ENCODE measurements at regions of chr5 and their contacts with region 1.

Region 1: GRCh38 chr5:97162045-97162444 is 19.6 kb upstream of the LIX1 start:
- DNase-seq: peak; percentile 44
- ATAC-seq: peak; percentile 82
- H3K4me3 ChIP-seq: no peak overlapping the region
- H3K27ac ChIP-seq: no peak overlapping the region
- H3K4me1 ChIP-seq: no peaks in the 10 kb centered on the region; the same call in 1 of the 2 replicates
- H3K27me3 ChIP-seq: no peaks in the 10 kb centered on the region
- CTCF ChIP-seq: peak; percentile 77 to 84 (median 82)
- EP300 ChIP-seq: no peak
- POLR2A ChIP-seq: no peak
- RAD21 ChIP-seq: peak; percentile 85

Region 2: GRCh38 chr5:96614110-96614691 is 547.8 kb before region 1 on chr5:
- CTCF ChIA-PET with region 1: interaction called, 30 read pairs
- POLR2A ChIA-PET with region 1: no interaction called
- RAD21 ChIA-PET with region 1: interaction called, 13 read pairs
- SMC1A ChIA-PET with region 1: interaction called, 13 read pairs
- in situ Hi-C with region 1: loop called (anchors 10 kb)
- intact Hi-C with region 1: loop called (anchors 2 kb)
- DNase-seq: peak; percentile 25
- ATAC-seq: peak; percentile 86
- H3K4me3 ChIP-seq: no peak overlapping the region
- H3K27ac ChIP-seq: no peak overlapping the region
- H3K4me1 ChIP-seq: no peaks in the 10 kb centered on the region
- H3K27me3 ChIP-seq: no peaks in the 10 kb centered on the region; a peak in 2 of 4 replicates
- CTCF ChIP-seq: peak; percentile 24 to 71 (median 45); a peak in 4 of 6 replicates
- EP300 ChIP-seq: no peak
- POLR2A ChIP-seq: no peak
- RAD21 ChIP-seq: peak; percentile 87

Region 3: GRCh38 chr5:96763026-96763425 is 399.0 kb before region 1 on chr5:
- CTCF ChIA-PET with region 1: interaction called, 19 read pairs
- POLR2A ChIA-PET with region 1: no interaction called
- RAD21 ChIA-PET with region 1: interaction called, 3 read pairs
- SMC1A ChIA-PET with region 1: interaction called, 10 read pairs
- in situ Hi-C with region 1: no loop called
- intact Hi-C with region 1: no loop called
- DNase-seq: no peak
- ATAC-seq: no peak
- H3K4me3 ChIP-seq: no peak overlapping the region
- H3K27ac ChIP-seq: no peak overlapping the region
- H3K4me1 ChIP-seq: no peaks in the 10 kb centered on the region
- H3K27me3 ChIP-seq: no peaks in the 10 kb centered on the region
- CTCF ChIP-seq: no peak
- EP300 ChIP-seq: no peak
- POLR2A ChIP-seq: no peak
- RAD21 ChIP-seq: no peak

Region 4: DNA sequence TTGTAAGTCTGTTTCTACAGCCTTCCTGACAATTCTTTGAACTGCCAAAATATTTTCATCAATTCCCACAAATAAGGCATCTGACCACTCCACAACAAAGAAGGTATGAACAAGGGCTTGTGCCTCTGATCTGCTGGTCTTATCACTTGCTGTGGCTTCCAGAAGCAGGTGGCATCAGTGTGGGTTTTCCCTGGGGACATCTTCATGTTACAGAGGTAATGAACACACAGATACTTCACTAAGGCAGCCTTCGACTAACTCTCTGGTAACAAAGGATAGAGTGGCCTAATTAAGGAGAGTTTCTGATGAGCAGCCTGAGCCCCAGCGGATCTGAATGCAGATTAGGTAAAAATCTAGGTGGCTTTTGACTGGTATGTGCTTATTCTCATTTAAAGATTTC is 301.0 kb before region 1 on chr5:
- CTCF ChIA-PET with region 1: interaction called, 223 read pairs
- POLR2A ChIA-PET with region 1: no interaction called
- RAD21 ChIA-PET with region 1: interaction called, 10 read pairs
- SMC1A ChIA-PET with region 1: interaction called, 178 read pairs
- in situ Hi-C with region 1: no loop called
- intact Hi-C with region 1: no loop called
- DNase-seq: no peak
- ATAC-seq: peak; percentile 84
- H3K4me3 ChIP-seq: no peak overlapping the region
- H3K27ac ChIP-seq: no peak overlapping the region
- H3K4me1 ChIP-seq: no peaks in the 10 kb centered on the region
- H3K27me3 ChIP-seq: no peaks in the 10 kb centered on the region
- CTCF ChIP-seq: no peak
- EP300 ChIP-seq: no peak; a peak in 1 of 4 replicates
- POLR2A ChIP-seq: no peak
- RAD21 ChIP-seq: no peak

Region 5: GRCh38 chr5:97009212-97009898 is 152.7 kb before region 1 on chr5:
- CTCF ChIA-PET with region 1: interaction called, 14 read pairs
- POLR2A ChIA-PET with region 1: no interaction called
- RAD21 ChIA-PET with region 1: interaction called, 5 read pairs
- SMC1A ChIA-PET with region 1: interaction called, 8 read pairs
- in situ Hi-C with region 1: no loop called
- intact Hi-C with region 1: no loop called
- DNase-seq: peak; percentile 19
- ATAC-seq: peak; percentile 86
- H3K4me3 ChIP-seq: no peak overlapping the region
- H3K27ac ChIP-seq: peak overlapping the region; percentile 8; the same call in 1 of the 2 replicates
- H3K4me1 ChIP-seq: peaks cover 11% of the 10 kb centered on the region; the same call in 1 of the 2 replicates
- H3K27me3 ChIP-seq: no peaks in the 10 kb centered on the region
- CTCF ChIP-seq: no peak
- EP300 ChIP-seq: no peak
- POLR2A ChIP-seq: no peak
- RAD21 ChIP-seq: no peak

Region 6: DNA sequence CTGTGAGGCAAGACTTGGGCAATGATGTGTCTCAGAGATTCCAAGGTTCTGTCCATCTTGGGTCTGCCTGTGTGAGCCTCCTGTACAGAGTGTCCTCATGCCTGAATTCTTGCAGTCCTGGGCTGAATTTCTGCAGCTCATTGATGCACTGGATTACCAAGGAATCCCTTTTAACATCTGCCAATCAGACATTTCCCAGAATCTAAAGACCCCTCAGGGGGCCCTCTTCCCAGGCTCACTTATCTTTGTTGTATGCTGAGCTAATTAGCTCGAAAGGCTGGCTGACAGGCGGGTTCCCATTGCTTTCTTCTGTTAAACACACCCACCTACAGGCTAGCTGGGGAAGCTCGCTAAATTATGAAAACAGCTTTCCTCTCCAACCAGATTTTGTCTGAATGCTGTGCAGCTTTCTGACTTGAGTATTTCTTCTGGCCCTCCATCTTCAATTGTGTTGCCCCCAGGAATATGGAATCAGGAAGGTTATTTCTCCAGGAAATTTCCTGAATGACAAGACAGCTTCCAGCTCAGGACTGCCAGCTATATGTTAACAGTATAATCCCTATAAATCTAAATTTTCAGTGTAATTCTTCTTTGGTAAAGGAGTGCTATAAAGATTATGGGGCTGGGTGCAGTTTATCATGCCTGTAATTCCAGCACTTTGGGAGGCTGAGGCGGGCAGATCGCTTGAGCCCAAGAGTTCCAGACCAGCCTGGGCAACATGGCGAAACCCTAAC is 19.4 kb before region 1 on chr5 and contains the start of gene LIX1:
- CTCF ChIA-PET with region 1: interaction called, 121 read pairs
- POLR2A ChIA-PET with region 1: interaction called, 3 read pairs
- RAD21 ChIA-PET with region 1: interaction called, 25 read pairs
- SMC1A ChIA-PET with region 1: interaction called, 18 read pairs
- in situ Hi-C with region 1: no loop called
- intact Hi-C with region 1: no loop called
- DNase-seq: no peak
- ATAC-seq: peak; percentile 97
- H3K4me3 ChIP-seq: no peak within 1 kb of the TSS
- H3K27ac ChIP-seq: no peak within 1 kb of the TSS
- H3K4me1 ChIP-seq: no peaks in the 10 kb centered on the region
- H3K27me3 ChIP-seq: no peaks in the 10 kb centered on the region
- CTCF ChIP-seq: peak; percentile 60 to 84 (median 70); a peak in 5 of 6 replicates
- EP300 ChIP-seq: no peak
- POLR2A ChIP-seq: no peak
- RAD21 ChIP-seq: peak; percentile 91
- polyA plus RNA-seq, gene LIX1: 0.02 TPM

Region 7: DNA sequence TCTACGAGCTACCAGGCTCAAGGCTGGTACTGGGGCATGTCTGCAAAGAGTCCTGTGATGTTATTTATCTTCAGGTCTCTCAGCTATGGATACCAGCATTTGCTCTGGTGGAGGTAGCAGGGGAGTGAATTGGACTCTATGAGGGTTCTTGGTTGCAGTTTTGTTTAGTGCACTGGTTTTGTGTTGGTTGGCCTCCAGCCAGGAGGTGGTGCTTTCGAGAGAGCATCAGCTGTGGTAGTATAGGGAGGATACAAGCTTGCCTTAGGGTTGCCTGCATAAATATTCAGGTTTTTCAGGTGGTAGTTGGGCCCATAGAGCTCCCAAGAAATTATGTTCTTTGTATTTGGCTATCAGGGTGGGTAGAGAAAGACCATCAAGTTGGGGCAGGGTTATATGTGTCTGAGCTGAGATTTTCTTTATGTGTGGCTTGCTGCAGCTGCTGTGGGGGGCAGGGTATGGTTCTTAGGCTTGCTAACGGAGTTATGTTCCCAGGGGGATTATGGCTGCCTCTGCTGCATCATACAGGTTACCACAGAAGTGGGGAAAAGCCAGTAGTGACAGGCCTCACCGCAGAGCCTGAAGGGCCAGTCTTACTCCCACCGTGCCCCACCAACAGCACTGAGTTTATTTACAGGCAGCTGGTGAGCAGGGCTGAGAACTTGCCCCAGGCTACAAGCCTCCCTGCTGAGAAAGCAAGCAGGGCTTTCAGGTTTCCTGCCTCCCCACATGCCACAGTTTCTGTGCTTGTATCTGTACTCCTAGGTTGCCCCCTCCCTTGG is 30.7 kb after region 1 on chr5:
- CTCF ChIA-PET with region 1: interaction called, 13 read pairs
- POLR2A ChIA-PET with region 1: no interaction called
- RAD21 ChIA-PET with region 1: no interaction called
- SMC1A ChIA-PET with region 1: interaction called, 5 read pairs
- in situ Hi-C with region 1: no loop called
- intact Hi-C with region 1: no loop called
- DNase-seq: peak; percentile 63
- ATAC-seq: peak; percentile 94
- H3K4me3 ChIP-seq: 0 out of 2 replicates have a peak overlapping the region, but pooled peaks have one; percentile 32
- H3K27ac ChIP-seq: peak overlapping the region; percentile 73
- H3K4me1 ChIP-seq: peaks cover 8% of the 10 kb centered on the region
- H3K27me3 ChIP-seq: no peaks in the 10 kb centered on the region
- CTCF ChIP-seq: no peak
- EP300 ChIP-seq: peak; percentile 28 to 49; a peak in 1 of 4 replicates
- POLR2A ChIP-seq: no peak
- RAD21 ChIP-seq: no peak